Activated CD8-positive, alpha-beta T cell treated with anti-CD3 and anti-CD28 coated beads, Interleukin-2, amount 10 ng/mL, durations not matched to agents 7 days and 5 days (primary cell): ENCODE measurements at regions of chr17 and their contacts with region 1.

Region 1: DNA sequence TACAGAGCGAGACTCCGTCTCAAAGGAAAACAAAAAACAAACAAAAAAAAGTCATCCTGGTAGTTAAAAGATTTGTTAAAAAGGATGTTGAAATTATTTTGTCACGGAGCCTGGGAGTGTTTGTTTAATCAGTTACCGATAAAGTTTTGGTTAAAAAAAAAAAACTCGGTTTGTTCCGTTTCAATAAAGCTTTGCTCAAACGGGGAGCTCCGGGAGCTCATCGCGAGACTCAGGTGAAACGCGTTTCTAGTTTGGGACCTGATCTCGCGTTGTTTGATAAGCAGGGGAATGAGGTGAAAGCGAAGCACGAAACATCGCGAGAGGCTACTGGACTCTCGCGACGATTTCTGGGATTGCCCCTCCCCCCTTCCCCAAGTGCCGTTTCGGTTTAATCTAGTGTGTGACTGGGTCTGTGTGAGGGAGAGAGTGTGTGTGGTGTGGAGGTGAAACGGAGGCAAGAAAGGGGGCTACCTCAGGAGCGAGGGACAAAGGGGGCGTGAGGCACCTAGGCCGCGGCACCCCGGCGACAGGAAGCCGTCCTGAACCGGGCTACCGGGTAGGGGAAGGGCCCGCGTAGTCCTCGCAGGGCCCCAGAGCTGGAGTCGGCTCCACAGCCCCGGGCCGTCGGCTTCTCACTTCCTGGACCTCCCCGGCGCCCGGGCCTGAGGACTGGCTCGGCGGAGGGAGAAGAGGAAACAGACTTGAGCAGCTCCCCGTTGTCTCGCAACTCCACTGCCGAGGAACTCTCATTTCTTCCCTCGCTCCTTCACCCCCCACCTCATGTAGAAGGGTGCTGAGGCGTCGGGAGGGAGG is at the start of gene CDK12:
- DNase-seq: peak; percentile 98
- ATAC-seq: peak; percentile 89
- H3K4me3 Mint-ChIP-seq: peak within 1 kb of the TSS; percentile 82
- H3K27ac Mint-ChIP-seq: peak within 1 kb of the TSS; percentile 94
- H3K4me1 Mint-ChIP-seq: peaks cover 26% of the 10 kb centered on the region
- H3K27me3 Mint-ChIP-seq: no peaks in the 10 kb centered on the region
- total RNA-seq, gene CDK12: 77.5 TPM

Region 2: DNA sequence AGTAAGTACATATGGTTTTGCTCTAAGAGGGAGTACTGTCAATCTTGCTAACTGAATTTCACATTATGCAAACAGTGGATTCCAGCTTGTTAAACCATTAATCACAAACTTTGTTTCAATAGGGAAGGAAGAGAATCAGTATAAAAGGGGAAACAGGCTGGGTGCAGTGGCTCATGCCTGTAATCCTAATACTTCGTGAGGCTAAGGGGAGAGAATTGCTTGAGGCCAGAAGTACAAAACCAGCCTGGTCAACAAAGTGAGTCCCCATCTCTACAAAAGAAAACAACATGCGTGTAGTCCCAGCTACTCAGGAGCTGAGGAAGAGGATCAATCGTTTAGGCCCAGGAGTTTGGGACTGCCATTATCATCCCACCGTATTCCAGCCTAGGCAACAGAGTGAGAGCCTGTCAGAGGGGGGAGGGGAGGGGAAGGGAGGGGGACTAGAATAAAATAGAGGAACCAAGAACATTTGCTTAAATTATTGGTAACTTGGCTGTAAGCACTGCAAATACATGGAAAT is 125.6 kb before region 1 on chr17:
- CTCF ChIA-PET with region 1: no interaction called
- POLR2A ChIA-PET with region 1: no interaction called
- DNase-seq: no peak
- ATAC-seq: no peak
- H3K4me3 Mint-ChIP-seq: no peak overlapping the region
- H3K27ac Mint-ChIP-seq: no peak overlapping the region
- H3K4me1 Mint-ChIP-seq: no peaks in the 10 kb centered on the region
- H3K27me3 Mint-ChIP-seq: no peaks in the 10 kb centered on the region

Region 3: DNA sequence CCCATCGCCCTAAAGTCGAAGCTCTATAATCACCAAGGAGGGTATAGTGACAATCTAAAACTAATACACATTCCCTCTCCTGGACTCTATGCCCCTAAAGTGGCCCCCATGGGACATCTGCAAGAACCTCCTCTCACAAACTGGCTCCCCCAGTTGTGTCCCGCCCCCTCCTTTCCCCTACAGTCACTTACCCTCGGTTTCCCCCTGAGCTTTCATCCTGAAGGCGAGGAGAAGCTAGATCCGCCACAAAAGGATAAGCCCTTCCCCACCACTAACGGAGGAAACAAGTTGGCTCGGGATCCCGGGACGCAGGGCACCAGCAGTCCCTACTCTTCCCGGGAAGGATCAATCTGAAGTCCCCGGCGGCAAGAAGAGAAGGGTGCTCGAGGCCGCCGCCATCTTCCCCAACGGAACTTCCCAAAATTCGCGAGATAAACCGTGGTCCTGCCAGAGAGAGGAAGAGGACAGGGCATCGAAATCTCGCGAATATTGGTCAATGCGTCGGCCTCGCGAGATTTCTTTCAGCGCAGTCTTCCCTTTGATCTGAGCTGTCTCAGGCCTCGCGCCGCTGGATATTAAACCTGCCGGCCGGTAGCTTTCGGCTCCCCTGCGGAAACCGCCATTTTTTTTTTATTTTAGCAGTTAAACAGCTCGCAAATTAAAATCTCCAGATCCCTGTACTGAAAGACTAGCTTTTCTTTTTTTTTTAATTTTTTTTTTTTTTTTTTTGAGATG is 10.3 kb before region 1 on chr17 and contains the start of gene MED1:
- CTCF ChIA-PET with region 1: interaction called, 25 read pairs
- POLR2A ChIA-PET with region 1: interaction called, 134 read pairs
- DNase-seq: peak; percentile 97
- ATAC-seq: peak; percentile 98
- H3K4me3 Mint-ChIP-seq: peak within 1 kb of the TSS; percentile 98
- H3K27ac Mint-ChIP-seq: peak within 1 kb of the TSS; percentile 95
- H3K4me1 Mint-ChIP-seq: peaks cover 30% of the 10 kb centered on the region
- H3K27me3 Mint-ChIP-seq: no peaks in the 10 kb centered on the region
- total RNA-seq, gene MED1: 52.8 to 53.2 TPM